ENCODE measurements at regions of chr6 and their contacts with region 1.

Region 1: GRCh38 chr6:43506667-43507471 is 3.3 kb downstream of the LRRC73 start:
- DNase-seq: peak; percentile 89
- ATAC-seq: peak; percentile 59
- H3K4me3 ChIP-seq: no peak overlapping the region
- H3K27ac ChIP-seq: no peak overlapping the region
- H3K4me1 ChIP-seq: peaks cover 7% of the 10 kb centered on the region
- H3K27me3 ChIP-seq: no peaks in the 10 kb centered on the region
- CTCF ChIP-seq: peak; percentile 94

Region 2: GRCh38 chr6:42928986-42929820 is 577.7 kb before region 1 on chr6 and contains the start of gene CNPY3:
- CTCF ChIA-PET with region 1: no interaction called
- POLR2A ChIA-PET with region 1: no interaction called
- intact Hi-C with region 1: no loop called
- DNase-seq: peak; percentile 97
- ATAC-seq: peak; percentile 88
- H3K4me3 ChIP-seq: peak within 1 kb of the TSS; percentile 86
- H3K27ac ChIP-seq: peak within 1 kb of the TSS; percentile 79
- H3K4me1 ChIP-seq: peaks cover 12% of the 10 kb centered on the region; the same call in 1 of the 2 replicates
- H3K27me3 ChIP-seq: no peaks in the 10 kb centered on the region
- CTCF ChIP-seq: no peak
- total RNA-seq, gene CNPY3: 37.5 and 42.2 TPM in 2 replicates

Region 3: DNA sequence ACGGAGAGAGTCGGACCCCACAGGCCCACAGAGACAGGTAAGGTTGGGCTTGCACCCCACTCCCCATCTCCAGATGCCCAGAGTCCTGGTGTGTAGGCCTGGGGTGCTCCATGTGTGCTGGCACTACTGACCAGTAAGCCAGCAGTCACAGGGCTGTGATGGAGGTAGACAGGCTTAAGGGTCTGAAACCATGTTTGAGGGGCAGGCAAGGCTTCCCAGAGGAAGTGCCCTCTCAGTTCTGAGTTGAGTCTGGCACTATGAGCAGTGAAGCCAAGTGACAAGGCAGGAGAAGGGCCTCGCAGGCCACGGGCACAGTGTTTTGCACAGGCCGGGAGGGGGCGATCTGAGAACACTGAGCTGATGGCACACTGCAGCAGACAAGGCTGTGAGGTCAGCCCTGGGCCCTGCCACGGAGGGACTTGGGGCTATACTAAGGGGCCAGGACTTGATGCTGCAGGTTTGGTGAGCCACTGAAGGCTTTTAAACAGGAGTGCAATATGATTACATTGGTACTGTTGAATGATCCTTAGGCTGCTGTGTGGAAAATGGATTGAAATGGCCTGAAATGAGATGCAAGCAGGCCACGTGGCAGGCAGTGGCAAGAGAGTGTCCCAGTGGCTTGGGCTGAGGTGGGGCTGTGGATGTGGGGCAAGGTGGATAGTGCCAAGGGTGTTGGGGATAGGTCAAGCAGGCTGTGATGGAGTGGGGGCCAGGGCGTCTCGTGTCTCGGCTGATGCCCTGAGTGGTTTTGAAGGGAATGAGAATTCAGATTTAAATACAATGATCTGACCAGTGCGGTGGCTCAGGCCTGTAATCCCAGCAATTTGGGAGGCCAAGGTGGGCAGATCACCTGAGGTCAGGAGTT is 243.3 kb before region 1 on chr6:
- CTCF ChIA-PET with region 1: no interaction called
- POLR2A ChIA-PET with region 1: no interaction called
- intact Hi-C with region 1: loop called (anchors 5 kb)
- DNase-seq: peak; percentile 77
- ATAC-seq: peak; percentile 99
- H3K4me3 ChIP-seq: no peak overlapping the region
- H3K27ac ChIP-seq: no peak overlapping the region
- H3K4me1 ChIP-seq: no peaks in the 10 kb centered on the region
- H3K27me3 ChIP-seq: no peaks in the 10 kb centered on the region
- CTCF ChIP-seq: peak; percentile 95

Region 4: GRCh38 chr6:43308101-43308989 is 198.5 kb before region 1 on chr6 and contains the start of gene CRIP3:
- CTCF ChIA-PET with region 1: no interaction called
- POLR2A ChIA-PET with region 1: interaction called, 16 read pairs
- intact Hi-C with region 1: no loop called
- DNase-seq: peak; percentile 64
- ATAC-seq: peak; percentile 78
- H3K4me3 ChIP-seq: peak within 1 kb of the TSS; percentile 69
- H3K27ac ChIP-seq: no peak within 1 kb of the TSS
- H3K4me1 ChIP-seq: peaks cover 10% of the 10 kb centered on the region; the same call in 1 of the 2 replicates
- H3K27me3 ChIP-seq: no peaks in the 10 kb centered on the region
- CTCF ChIP-seq: peak; percentile 53
- total RNA-seq, gene CRIP3: 0.29 TPM in 2 replicates

Region 5: DNA sequence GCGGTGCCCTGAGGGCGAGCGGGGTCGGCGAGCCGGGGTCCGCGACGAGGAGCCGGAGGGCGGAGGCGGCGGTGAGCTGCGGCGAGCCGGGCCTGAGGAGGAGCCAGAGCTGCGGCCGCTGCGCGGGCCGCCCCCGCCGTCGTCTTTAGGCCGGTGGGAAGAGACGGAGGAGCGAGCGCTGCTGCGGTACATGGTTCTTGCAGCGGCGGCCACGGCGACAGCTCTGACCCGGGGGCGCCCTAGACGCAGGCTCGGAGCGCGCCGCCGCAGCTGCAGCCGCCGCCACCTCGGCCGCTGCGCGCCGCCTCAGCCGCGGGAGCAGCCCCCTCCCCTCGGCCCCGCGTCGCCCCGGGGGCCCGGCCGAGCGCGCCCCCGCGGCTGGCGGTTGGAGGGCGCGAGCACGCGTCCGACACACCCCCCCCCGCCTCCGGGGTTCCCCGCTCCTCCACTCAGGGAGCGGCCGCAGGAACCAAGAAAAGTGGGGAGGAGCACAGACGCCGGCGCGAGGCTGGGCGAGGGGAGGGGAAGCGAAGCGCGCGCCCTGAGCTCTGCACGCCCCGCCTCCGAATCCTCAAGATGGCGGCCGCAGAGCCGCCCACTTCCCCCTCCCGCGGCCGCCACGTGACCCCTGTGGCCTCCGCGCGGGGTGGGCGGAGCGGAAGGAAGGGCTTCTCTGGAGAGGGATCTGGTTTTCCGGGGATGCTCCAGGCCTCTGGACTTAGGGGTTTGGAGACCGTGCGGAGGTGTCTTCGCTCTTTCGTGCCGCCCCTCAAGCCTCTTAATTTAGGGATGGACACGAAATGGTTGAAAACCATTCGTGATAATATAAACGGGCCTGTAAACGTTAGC is 137.5 kb before region 1 on chr6 and contains the start of gene ZNF318:
- CTCF ChIA-PET with region 1: no interaction called
- POLR2A ChIA-PET with region 1: no interaction called
- intact Hi-C with region 1: loop called (anchors 10 kb)
- DNase-seq: peak; percentile 97
- ATAC-seq: peak; percentile 95
- H3K4me3 ChIP-seq: peak within 1 kb of the TSS; percentile 94
- H3K27ac ChIP-seq: peak within 1 kb of the TSS; percentile 60
- H3K4me1 ChIP-seq: peaks cover 22% of the 10 kb centered on the region
- H3K27me3 ChIP-seq: no peaks in the 10 kb centered on the region
- CTCF ChIP-seq: no peak
- total RNA-seq, gene ZNF318: 8.2 and 8.9 TPM in 2 replicates

Region 6: DNA sequence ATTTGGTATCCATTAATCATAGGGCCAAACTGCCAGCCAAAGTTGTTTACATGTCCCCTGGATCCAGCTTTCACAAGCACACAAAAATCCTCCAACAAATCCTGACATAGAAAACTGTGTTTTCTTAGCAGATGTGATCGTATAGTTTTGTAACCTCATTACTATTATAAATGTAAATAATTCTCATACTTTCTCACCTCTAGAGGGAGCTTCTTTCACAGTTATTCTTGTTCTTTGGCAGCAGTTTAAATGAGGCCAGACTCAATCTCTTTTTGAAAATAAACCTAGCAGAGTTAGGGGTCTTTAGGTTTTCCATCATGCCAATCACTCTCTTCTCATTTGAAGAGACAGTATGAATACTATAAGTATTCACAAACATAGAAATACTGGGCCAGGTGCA is 120.4 kb before region 1 on chr6:
- CTCF ChIA-PET with region 1: no interaction called
- POLR2A ChIA-PET with region 1: no interaction called
- intact Hi-C with region 1: loop called (anchors 2 kb)
- DNase-seq: no peak
- ATAC-seq: no peak
- H3K4me3 ChIP-seq: no peak overlapping the region
- H3K27ac ChIP-seq: no peak overlapping the region
- H3K4me1 ChIP-seq: peaks cover 13% of the 10 kb centered on the region
- H3K27me3 ChIP-seq: no peaks in the 10 kb centered on the region
- CTCF ChIP-seq: no peak

Region 7: GRCh38 chr6:43454696-43455530 is 52.0 kb before region 1 on chr6:
- CTCF ChIA-PET with region 1: interaction called, 13 read pairs
- POLR2A ChIA-PET with region 1: no interaction called
- intact Hi-C with region 1: loop called (anchors 1 kb)
- DNase-seq: no peak
- ATAC-seq: peak; percentile 74
- H3K4me3 ChIP-seq: peak overlapping the region; percentile 71
- H3K27ac ChIP-seq: no peak overlapping the region
- H3K4me1 ChIP-seq: peaks cover 5% of the 10 kb centered on the region; the same call in 1 of the 2 replicates
- H3K27me3 ChIP-seq: no peaks in the 10 kb centered on the region
- CTCF ChIP-seq: 0 out of 2 replicates have a peak, but pooled peaks have one; percentile 14